Mammary epithelial cell (primary cell): ENCODE measurements at regions of chr13 and their contacts with region 1.

Region 1: GRCh38 chr13:51435002-51435578 is 17.7 kb downstream of the INTS6 start:
- DNase-seq: no peak
- H3K4me3 ChIP-seq: no peak overlapping the region
- H3K27ac ChIP-seq: no peak overlapping the region
- H3K4me1 ChIP-seq: no peaks in the 10 kb centered on the region
- H3K27me3 ChIP-seq: no peaks in the 10 kb centered on the region
- CTCF ChIP-seq: peak; percentile 53 to 60

Region 2: DNA sequence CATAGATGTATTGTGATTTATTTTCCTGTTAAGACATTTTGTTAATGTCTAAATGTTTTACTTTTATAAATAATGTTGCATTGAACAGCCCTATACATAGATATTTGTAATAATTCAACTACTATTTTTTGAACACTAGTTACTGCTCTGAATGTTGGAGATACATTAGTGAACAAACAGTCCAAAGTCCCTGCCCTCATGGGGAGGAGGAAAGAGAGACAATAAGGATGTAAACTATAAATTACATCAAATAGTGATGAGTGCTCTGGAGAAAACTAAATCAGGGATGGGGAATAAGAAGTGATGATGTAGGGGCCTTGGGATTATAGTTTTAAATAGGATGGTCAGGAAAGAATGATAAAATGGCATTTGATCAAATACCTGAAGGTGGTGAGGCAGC is 30.0 kb after region 1 on chr13:
- CTCF ChIA-PET with region 1: no interaction called
- dilution Hi-C with region 1: no loop called
- in situ Hi-C with region 1: no loop called
- intact Hi-C with region 1: no loop called
- DNase-seq: no peak
- H3K4me3 ChIP-seq: no peak overlapping the region
- H3K27ac ChIP-seq: no peak overlapping the region
- H3K4me1 ChIP-seq: no peaks in the 10 kb centered on the region
- H3K27me3 ChIP-seq: no peaks in the 10 kb centered on the region
- CTCF ChIP-seq: no peak

Region 3: DNA sequence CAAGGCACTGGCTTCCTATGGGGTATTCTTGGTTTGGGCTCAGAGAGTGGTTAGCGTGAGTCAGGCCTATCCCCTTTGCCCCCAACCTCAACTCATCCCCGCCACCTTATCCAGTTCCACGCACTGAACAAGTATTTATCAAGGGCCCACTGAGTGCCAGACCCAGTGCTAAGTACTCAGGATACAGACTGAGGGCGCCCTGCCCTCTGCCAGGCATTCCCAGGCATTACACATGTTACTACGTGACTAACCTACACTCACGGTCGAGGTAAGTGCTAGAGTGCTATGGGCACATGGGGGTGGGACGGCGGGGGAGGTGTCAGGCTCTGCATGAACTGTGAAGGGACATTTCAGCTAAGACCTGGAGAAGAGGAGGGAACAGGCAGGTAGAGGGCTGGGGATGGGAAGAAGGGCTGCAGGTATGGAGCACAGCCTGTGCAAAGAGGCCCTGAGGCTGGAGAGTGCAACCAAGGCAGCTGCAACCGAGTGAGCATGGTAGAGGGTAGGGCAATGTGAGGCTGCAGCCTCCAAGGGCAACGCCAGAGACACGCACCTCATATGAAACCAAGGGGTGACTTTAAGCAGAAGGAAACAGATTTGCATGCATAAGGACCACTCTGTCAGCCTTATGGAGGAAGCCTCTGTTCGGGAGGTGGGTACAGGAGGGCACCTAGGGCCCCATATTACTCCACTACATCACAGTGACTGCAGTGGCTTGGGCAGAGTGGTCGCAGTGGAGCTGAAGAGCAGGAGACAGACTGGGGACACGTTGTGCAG is 346.3 kb after region 1 on chr13:
- CTCF ChIA-PET with region 1: interaction called, 3 read pairs
- dilution Hi-C with region 1: loop called (anchors 25 kb)
- in situ Hi-C with region 1: no loop called
- intact Hi-C with region 1: loop called (anchors 1 kb)
- DNase-seq: peak; percentile 31
- H3K4me3 ChIP-seq: no peak overlapping the region
- H3K27ac ChIP-seq: no peak overlapping the region
- H3K4me1 ChIP-seq: no peaks in the 10 kb centered on the region
- H3K27me3 ChIP-seq: no peaks in the 10 kb centered on the region
- CTCF ChIP-seq: peak; percentile 51 to 69